Breast epithelium (tissue), 4 donors: ENCODE measurements at regions of chr14 and their contacts with region 1.

Region 1: GRCh38 chr14:74324931-74325361 is 22.2 kb upstream of the ABCD4 start:
- DNase-seq: no peak
- H3K4me3 ChIP-seq: no peak overlapping the region
- H3K27ac ChIP-seq: no peak overlapping the region
- H3K4me1 ChIP-seq: no peaks in the 10 kb centered on the region
- H3K27me3 ChIP-seq: no peaks in the 10 kb centered on the region
- CTCF ChIP-seq: peak in 2 of 3 donors; percentile 14 to 28
- POLR2A ChIP-seq: no peak

Region 2: GRCh38 chr14:74048281-74048680 is 276.7 kb before region 1 on chr14:
- intact Hi-C with region 1: no loop called
- DNase-seq: no peak
- H3K4me3 ChIP-seq: no peak overlapping the region
- H3K27ac ChIP-seq: no peak overlapping the region
- H3K4me1 ChIP-seq: no peaks in the 10 kb centered on the region
- H3K27me3 ChIP-seq: no peaks in the 10 kb centered on the region
- CTCF ChIP-seq: no peak
- POLR2A ChIP-seq: no peak

Region 3: GRCh38 chr14:74296037-74296467 is 28.9 kb before region 1 on chr14:
- intact Hi-C with region 1: loop called (anchors 1 kb)
- DNase-seq: no peak
- H3K4me3 ChIP-seq: no peak overlapping the region
- H3K27ac ChIP-seq: no peak overlapping the region
- H3K4me1 ChIP-seq: no peaks in the 10 kb centered on the region
- H3K27me3 ChIP-seq: no peaks in the 10 kb centered on the region
- CTCF ChIP-seq: no peak
- POLR2A ChIP-seq: no peak

Region 4: GRCh38 chr14:74380156-74380555 is 55.2 kb after region 1 on chr14:
- intact Hi-C with region 1: no loop called
- DNase-seq: no peak
- H3K4me3 ChIP-seq: no peak overlapping the region
- H3K27ac ChIP-seq: no peak overlapping the region
- H3K4me1 ChIP-seq: no peaks in the 10 kb centered on the region
- H3K27me3 ChIP-seq: no peaks in the 10 kb centered on the region
- CTCF ChIP-seq: no peak
- POLR2A ChIP-seq: no peak